ENCODE measurements at regions of chr14 and their contacts with region 1.

Region 1: DNA sequence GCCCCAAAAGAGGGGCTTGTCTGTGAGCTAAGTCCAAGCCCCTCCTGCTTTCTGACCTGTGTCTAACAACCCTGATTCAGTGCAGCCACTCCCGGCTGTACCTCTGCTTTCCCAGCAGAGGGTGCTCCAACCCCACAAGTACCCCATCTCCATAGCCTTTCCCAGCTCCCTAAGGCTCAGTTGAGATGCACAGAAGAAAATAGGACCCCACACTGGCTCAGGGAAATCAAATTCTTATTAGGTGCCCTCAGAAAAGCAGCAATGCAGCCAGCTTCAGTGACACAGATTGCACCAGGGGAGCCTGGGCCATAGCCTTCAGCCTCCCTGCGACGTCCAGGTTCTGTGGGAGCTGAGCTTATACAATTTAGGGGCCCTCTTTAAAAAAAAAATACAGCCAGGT is 49.9 kb downstream of the LRRC74A start:
- DNase-seq: peak; percentile 83
- H3K4me3 ChIP-seq: no peak overlapping the region
- H3K27ac ChIP-seq: no peak overlapping the region
- H3K4me1 ChIP-seq: no peaks in the 10 kb centered on the region
- H3K27me3 ChIP-seq: no peaks in the 10 kb centered on the region
- CTCF ChIP-seq: peak; percentile 96

Region 2: DNA sequence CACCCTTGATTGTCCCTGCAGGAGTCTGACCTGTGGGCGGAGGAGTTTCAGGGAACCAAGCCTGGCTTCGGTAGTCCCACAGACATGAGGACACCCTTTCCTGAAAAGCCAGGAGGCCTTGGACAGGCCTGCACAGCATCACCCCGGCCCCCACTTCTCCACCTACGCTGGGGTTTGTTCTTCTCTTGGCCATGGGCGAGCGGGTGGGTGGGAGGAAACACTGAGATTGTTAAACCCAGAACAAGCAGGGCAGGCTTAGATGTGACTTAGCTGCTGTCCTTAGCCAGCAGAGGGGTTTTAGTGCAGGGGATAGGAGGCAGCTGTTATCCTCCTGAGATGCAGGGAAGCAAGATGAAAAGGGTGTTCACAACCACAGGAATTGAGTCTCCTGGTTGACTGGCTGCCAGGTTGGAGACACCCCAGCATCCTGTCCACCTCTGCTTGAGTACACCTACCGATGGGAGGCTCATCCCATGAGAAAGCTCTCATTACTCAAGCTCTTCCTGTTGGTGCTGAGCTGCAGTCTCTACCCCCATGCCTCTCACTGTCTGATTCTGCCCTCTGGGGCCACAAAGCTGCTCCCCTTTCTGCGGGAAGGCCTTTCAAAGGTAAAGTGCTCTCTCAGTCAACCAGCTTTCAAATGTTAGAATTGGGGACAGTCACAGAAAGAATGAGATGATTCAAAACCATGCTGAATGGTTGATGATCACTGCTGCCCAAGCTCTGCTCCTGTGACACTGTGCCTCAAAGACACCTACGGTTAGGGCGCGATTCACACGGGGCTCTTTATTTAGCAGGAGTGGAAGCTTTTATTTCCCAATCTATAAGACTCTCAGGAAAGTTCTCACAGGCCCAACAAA is 66.1 kb after region 1 on chr14:
- CTCF ChIA-PET with region 1: interaction called, 12 read pairs
- POLR2A ChIA-PET with region 1: no interaction called
- intact Hi-C with region 1: no loop called
- DNase-seq: no peak
- H3K4me3 ChIP-seq: no peak overlapping the region
- H3K27ac ChIP-seq: peak overlapping the region; percentile 40
- H3K4me1 ChIP-seq: peaks cover 20% of the 10 kb centered on the region
- H3K27me3 ChIP-seq: no peaks in the 10 kb centered on the region
- CTCF ChIP-seq: no peak

Region 3: DNA sequence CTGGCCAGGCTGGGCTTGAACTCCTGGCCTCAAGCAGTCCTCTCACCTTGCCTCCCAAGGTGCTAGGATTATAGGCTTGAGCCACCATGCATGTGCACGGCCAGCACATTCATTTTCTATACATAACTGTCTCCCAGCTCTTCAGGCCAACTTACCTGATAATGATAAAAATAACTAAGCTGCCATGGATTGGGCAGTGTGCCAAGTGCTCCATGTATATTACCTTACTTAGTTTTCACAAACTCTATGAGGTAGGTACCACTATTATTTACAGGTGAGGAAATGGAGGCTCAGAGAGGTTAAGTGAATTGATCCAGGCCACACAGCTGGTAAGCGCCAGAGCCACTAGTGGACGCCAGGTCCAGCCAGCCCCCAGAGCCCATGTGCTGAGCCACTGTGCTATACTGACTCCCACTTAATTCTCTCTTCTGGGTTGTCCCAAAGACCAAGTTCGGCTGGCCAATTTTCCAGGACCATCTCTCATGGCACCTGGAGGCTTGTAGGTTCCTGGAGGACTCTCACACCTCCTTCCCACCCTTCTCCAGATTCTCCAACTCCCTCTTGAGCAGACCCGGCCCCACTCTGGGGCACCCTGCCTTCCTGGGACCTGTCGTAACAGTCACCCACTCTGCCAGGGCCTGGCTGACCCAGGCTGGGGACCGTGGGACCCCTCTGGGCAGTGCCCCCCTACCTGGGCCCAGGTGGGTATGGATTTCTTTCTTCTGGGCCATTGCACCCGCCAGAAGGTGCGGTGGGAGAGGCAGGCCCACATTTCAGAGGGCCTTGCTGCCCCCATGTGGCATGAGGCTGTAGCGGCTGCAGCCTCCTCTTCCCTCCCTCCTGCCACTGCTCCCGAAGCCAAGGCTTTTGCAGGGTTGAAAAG is 191.8 kb after region 1 on chr14:
- CTCF ChIA-PET with region 1: interaction called, 82 read pairs
- POLR2A ChIA-PET with region 1: no interaction called
- intact Hi-C with region 1: loop called (anchors 1 kb)
- DNase-seq: peak; percentile 77
- H3K4me3 ChIP-seq: no peak overlapping the region
- H3K27ac ChIP-seq: no peak overlapping the region
- H3K4me1 ChIP-seq: no peaks in the 10 kb centered on the region
- H3K27me3 ChIP-seq: no peaks in the 10 kb centered on the region
- CTCF ChIP-seq: peak; percentile 98

Region 4: DNA sequence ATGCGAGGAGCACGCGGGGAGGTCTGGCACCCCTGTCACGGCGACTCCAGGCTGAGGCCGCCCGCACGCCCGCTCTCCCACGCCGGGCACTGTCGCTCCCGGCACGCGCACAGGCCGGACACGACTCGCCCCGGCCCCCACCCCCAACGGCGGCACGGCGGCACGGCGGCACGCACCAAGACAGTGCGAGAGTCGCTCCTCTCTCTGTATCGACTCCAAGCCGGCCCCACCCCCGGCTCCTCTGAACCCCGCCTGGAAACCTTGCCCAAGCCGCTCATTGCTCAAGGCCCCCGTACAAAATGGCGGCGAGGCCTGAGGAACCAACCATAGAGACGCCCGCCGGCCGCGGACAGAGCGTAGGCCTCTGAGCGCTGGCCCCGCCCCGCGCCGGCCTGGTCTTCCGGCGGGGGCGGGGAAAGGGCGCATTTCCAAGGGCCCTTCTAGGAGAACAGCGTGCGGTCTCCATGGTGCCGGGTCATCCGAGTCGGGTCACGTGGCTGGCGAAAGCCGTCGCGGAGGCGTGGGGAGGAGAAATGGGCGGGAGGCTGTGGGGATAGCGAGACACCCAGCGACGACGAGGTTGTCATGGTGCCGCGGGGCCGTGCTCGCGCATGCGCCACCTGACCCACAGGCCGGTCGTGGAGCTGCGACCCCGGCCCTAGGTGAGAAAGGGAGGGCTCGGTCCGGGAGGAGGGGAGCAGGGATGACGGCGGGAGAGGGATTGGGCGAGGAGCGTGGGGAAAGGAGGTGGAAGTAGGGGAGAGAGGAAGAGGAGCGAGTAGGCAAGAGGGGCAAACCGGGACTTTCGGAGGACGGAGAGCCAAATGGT is 221.8 kb after region 1 on chr14 and contains the start of gene CIPC:
- CTCF ChIA-PET with region 1: interaction called, 12 read pairs
- POLR2A ChIA-PET with region 1: no interaction called
- intact Hi-C with region 1: loop called (anchors 1 kb)
- DNase-seq: peak; percentile 99
- H3K4me3 ChIP-seq: peak within 1 kb of the TSS; percentile 84
- H3K27ac ChIP-seq: peak within 1 kb of the TSS; percentile 91
- H3K4me1 ChIP-seq: peaks cover 17% of the 10 kb centered on the region
- H3K27me3 ChIP-seq: no peaks in the 10 kb centered on the region
- CTCF ChIP-seq: no peak
- total RNA-seq, gene CIPC: 24.8 and 31.1 TPM in 2 replicates

Region 5: DNA sequence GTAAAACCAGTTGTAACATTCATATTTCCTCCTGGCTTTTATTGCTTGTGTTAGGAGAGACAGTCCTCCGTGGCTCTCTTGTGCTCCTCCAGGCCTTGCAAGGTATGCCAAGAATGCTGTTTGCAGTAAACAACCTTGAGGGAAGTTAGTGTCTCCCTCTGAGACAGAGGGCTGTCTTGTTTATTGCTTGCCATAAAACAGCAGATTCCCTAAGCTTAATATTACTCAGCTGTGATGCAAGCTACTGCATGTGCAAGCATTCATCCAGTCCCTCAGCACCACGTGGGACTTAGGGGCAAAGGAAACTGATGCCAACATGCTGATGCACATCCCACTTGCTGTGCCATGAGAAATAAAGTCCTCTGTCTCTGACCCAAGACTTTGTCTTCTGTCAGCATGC is 438.0 kb after region 1 on chr14:
- CTCF ChIA-PET with region 1: interaction called, 5 read pairs
- POLR2A ChIA-PET with region 1: no interaction called
- intact Hi-C with region 1: loop called (anchors 5 kb)
- DNase-seq: no peak
- H3K4me3 ChIP-seq: no peak overlapping the region
- H3K27ac ChIP-seq: no peak overlapping the region
- H3K4me1 ChIP-seq: peaks cover 8% of the 10 kb centered on the region
- H3K27me3 ChIP-seq: no peaks in the 10 kb centered on the region
- CTCF ChIP-seq: no peak